ENCODE measurements at regions of chr15 and their contacts with region 1.

Region 1: GRCh38 chr15:33700695-33701304 is 267.5 kb upstream of the CHRM5 start:
- DNase-seq: peak; percentile 67
- ATAC-seq: peak; percentile 97
- H3K4me3 ChIP-seq: no peak overlapping the region
- H3K27ac ChIP-seq: no peak overlapping the region
- H3K4me1 ChIP-seq: peaks cover 0 to 3% of the 10 kb centered on the region in 2 experiments; a peak in 1 of 4 replicates
- H3K27me3 ChIP-seq: peaks cover 32% of the 10 kb centered on the region; the same call in 1 of the 2 replicates
- CTCF ChIP-seq: peak; percentile 43 to 94 (median 91)
- POLR2A ChIP-seq: no peak
- RAD21 ChIP-seq: peak; percentile 66

Region 2: DNA sequence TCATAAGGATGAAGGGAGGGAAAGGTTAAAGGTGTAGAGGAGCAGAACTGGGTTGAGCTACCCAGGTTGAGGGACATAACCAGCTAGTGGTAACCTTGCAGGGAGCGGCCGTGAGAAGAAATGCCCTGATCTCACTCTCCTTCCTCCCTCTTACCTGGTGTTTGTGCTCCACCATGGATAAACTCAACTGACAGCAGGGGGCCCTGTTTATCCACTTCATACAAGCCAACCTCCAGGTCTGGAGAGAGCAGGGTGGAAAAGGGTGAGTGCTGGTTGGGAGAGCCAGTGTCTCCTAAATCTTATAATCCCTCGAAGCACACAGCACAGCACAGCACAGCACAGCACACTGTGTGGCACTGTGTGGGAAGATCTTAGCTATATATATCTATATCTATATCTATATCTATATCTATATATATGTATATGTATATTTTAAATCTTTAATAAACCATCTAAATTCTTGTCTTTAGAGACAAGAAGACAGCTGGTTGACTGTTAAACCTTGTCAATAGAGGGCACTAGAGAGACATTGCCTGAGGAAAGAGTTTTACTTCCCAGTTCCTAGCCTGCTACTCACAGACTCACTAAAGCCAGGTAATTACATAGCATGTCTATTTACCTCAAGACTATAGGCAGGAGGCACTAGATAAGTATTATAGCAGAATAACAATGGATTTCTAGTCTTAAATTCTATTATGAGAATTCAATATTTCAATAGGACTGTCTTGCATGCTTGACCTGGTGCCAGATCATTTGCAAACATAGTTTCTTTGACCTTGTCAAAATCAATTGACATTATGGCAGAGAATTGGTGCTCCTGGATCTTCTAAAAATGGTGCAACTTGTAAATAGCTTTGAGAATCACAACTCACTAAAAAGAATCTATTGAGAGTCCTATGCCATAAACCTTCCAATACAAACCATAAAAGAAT is 484.6 kb before region 1 on chr15:
- CTCF ChIA-PET with region 1: interaction called, 14 read pairs
- POLR2A ChIA-PET with region 1: no interaction called
- RAD21 ChIA-PET with region 1: no interaction called
- intact Hi-C with region 1: no loop called
- DNase-seq: no peak
- ATAC-seq: peak; percentile 86
- H3K4me3 ChIP-seq: no peak overlapping the region
- H3K27ac ChIP-seq: no peak overlapping the region
- H3K4me1 ChIP-seq: peaks cover 0 to 6% of the 10 kb centered on the region in 2 experiments; a peak in 2 of 4 replicates
- H3K27me3 ChIP-seq: no peaks in the 10 kb centered on the region
- CTCF ChIP-seq: peak; percentile 33 to 74 (median 56); a peak in 5 of 6 replicates
- POLR2A ChIP-seq: no peak
- RAD21 ChIP-seq: peak; percentile 34

Region 3: DNA sequence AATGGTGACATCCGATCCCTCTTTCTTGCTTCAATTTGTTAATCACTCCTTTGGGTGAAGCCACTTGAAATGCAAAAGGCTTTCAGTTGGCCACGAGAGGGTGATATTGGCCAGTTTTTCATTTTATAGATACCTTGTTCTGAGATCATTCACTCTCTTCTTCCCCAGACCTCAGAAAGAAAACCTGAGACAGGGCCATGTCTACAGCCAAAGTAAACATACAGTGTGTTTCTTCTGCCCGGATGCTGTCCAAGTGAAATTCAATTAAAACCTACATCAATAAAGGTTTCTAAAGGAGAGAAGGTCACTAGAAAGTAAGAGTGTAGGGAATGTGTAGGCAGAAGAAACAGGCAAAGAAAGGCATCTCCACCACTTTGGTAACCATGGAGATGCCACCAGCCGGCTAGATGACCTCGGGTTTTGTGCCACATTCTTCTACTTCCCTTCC is 466.8 kb before region 1 on chr15:
- CTCF ChIA-PET with region 1: interaction called, 29 read pairs
- POLR2A ChIA-PET with region 1: no interaction called
- RAD21 ChIA-PET with region 1: interaction called in 1 of 2 experiments, 4 read pairs
- intact Hi-C with region 1: loop called (anchors 1 kb)
- DNase-seq: peak; percentile 41
- ATAC-seq: peak; percentile 86
- H3K4me3 ChIP-seq: no peak overlapping the region
- H3K27ac ChIP-seq: no peak overlapping the region
- H3K4me1 ChIP-seq: no peaks in the 10 kb centered on the region
- H3K27me3 ChIP-seq: peaks cover 32% of the 10 kb centered on the region
- CTCF ChIP-seq: peak; percentile 41 to 78 (median 46); a peak in 4 of 6 replicates
- POLR2A ChIP-seq: no peak
- RAD21 ChIP-seq: peak; percentile 62

Region 4: DNA sequence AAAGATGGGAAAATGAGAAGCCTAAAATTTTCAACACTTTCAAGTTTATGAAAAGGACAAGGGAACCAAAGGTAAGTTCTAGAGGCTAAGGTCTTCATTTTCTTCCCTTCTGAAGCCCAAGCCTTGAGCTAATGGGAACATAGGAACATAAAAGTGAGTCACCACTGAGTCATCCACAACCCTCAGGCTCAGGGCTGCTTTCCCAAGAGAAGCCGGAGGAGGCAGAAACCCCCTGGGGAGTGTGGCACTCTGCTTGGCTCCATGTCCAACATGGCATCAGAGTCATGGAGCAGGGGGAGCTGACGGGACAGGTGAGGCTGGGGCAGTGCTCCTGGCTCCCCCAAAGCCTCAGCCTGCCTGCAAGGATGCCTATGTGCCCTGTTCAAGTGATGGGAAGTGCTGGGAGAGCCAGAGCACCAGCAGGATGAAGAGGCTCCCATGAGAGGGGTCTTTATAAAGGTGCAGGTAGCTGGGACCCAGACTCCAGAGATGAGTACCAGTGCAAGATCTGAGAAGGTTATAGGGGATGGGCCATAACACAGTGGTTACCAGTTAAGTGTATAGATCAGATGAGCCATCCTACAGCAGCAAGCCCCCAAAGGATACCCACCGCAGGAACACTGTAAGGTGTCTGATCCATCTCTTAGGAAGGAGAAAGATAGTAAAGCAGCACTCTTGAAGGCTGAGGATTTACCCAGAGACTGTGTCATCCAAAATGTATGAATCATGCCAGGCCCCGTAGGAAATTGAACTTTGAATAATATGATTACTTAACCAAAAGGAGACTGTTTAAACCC is 421.8 kb before region 1 on chr15:
- CTCF ChIA-PET with region 1: interaction called, 10 read pairs
- POLR2A ChIA-PET with region 1: no interaction called
- RAD21 ChIA-PET with region 1: interaction called in 1 of 2 experiments, 3 read pairs
- intact Hi-C with region 1: no loop called
- DNase-seq: peak; percentile 92
- ATAC-seq: peak; percentile 99
- H3K4me3 ChIP-seq: peak overlapping the region in 1 of 2 experiments; percentile 5; a peak in 1 of 4 replicates
- H3K27ac ChIP-seq: peak overlapping the region; percentile 42; the same call in 1 of the 2 replicates
- H3K4me1 ChIP-seq: peaks cover 15 to 18% of the 10 kb centered on the region in 2 experiments
- H3K27me3 ChIP-seq: no peaks in the 10 kb centered on the region
- CTCF ChIP-seq: peak in 2 of 3 experiments; percentile 18 to 28; a peak in 2 of 6 replicates
- POLR2A ChIP-seq: no peak
- RAD21 ChIP-seq: no peak

Region 5: DNA sequence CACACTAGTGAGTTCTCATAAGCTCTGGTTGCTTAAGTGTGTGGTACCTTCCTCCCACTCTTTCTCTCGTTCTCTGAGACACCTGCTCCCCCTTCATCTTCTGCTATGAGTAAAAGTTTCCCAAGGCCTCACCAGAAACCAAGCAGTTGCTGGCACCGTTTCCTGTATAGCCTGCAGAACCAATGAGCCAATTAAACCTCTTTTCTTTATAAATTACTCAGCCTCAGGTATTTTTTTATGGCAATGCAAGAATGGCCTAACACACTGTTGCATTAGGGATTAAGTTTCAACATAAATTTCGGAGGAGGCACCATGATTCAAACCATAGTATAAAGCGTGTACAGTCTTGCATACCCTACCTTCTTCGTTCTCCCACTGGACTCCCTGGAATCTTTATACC is 15.2 kb after region 1 on chr15:
- CTCF ChIA-PET with region 1: interaction called, 23 read pairs
- POLR2A ChIA-PET with region 1: no interaction called
- RAD21 ChIA-PET with region 1: no interaction called
- intact Hi-C with region 1: no loop called
- DNase-seq: no peak
- ATAC-seq: no peak
- H3K4me3 ChIP-seq: no peak overlapping the region
- H3K27ac ChIP-seq: no peak overlapping the region
- H3K4me1 ChIP-seq: peaks cover 0 to 5% of the 10 kb centered on the region in 2 experiments; a peak in 1 of 4 replicates
- H3K27me3 ChIP-seq: 0 out of 2 replicates have a peak, but pooled peaks cover 4% of the 10 kb centered on the region
- CTCF ChIP-seq: no peak
- POLR2A ChIP-seq: no peak
- RAD21 ChIP-seq: no peak

Region 6: GRCh38 chr15:33729653-33730052 is 28.9 kb after region 1 on chr15:
- CTCF ChIA-PET with region 1: interaction called, 17 read pairs
- POLR2A ChIA-PET with region 1: no interaction called
- RAD21 ChIA-PET with region 1: no interaction called
- intact Hi-C with region 1: no loop called
- DNase-seq: peak; percentile 6
- ATAC-seq: peak; percentile 59; the same call in 1 of the 2 replicates
- H3K4me3 ChIP-seq: no peak overlapping the region
- H3K27ac ChIP-seq: no peak overlapping the region
- H3K4me1 ChIP-seq: no peaks in the 10 kb centered on the region
- H3K27me3 ChIP-seq: 0 out of 2 replicates have a peak, but pooled peaks cover 4% of the 10 kb centered on the region
- CTCF ChIP-seq: peak; percentile 7 to 43 (median 25); a peak in 3 of 6 replicates
- POLR2A ChIP-seq: no peak
- RAD21 ChIP-seq: peak; percentile 28; the same call in 1 of the 2 replicates

Region 7: GRCh38 chr15:34223904-34224596 is 523.2 kb after region 1 on chr15:
- CTCF ChIA-PET with region 1: no interaction called
- POLR2A ChIA-PET with region 1: no interaction called
- RAD21 ChIA-PET with region 1: no interaction called
- intact Hi-C with region 1: no loop called
- DNase-seq: no peak
- ATAC-seq: no peak
- H3K4me3 ChIP-seq: peak overlapping the region; percentile 76 to 100
- H3K27ac ChIP-seq: peak overlapping the region; percentile 95
- H3K4me1 ChIP-seq: peaks cover 12 to 15% of the 10 kb centered on the region in 2 experiments; a peak in 3 of 4 replicates
- H3K27me3 ChIP-seq: no peaks in the 10 kb centered on the region
- CTCF ChIP-seq: no peak
- POLR2A ChIP-seq: no peak
- RAD21 ChIP-seq: no peak